ENCODE measurements at regions of chr1 and their contacts with region 1.

Region 1: GRCh38 chr1:24111996-24112779 is at the start of gene MYOM3:
- DNase-seq: peak; percentile 89
- total RNA-seq, gene MYOM3: 249 TPM

Region 2: DNA sequence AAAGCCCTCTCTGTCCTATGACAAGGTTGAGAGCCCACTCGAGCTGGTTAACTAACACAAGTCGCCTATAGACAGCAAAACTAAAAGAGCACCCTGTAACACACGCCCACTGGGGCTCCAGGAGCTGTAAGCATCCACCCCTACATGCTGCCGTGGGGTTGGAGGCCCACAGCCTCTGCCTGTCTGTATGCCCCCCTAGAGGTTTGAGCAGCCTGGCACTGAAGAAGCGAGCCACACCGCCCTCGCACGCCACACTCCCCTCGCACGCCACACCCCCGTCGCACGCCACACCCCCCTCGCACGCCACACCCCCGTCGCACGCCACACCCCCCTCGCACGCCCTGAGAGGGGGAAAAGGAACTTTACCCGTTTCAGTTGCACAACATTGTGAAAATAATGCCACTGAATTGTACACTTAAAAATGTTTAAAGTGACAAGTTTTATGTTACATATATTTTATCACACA is 273.8 kb before region 1 on chr1:
- intact Hi-C with region 1: no loop called
- DNase-seq: peak; percentile 87

Region 3: GRCh38 chr1:23923592-23924499 is 188.3 kb before region 1 on chr1:
- intact Hi-C with region 1: loop called (anchors 10 kb)
- DNase-seq: no peak

Region 4: DNA sequence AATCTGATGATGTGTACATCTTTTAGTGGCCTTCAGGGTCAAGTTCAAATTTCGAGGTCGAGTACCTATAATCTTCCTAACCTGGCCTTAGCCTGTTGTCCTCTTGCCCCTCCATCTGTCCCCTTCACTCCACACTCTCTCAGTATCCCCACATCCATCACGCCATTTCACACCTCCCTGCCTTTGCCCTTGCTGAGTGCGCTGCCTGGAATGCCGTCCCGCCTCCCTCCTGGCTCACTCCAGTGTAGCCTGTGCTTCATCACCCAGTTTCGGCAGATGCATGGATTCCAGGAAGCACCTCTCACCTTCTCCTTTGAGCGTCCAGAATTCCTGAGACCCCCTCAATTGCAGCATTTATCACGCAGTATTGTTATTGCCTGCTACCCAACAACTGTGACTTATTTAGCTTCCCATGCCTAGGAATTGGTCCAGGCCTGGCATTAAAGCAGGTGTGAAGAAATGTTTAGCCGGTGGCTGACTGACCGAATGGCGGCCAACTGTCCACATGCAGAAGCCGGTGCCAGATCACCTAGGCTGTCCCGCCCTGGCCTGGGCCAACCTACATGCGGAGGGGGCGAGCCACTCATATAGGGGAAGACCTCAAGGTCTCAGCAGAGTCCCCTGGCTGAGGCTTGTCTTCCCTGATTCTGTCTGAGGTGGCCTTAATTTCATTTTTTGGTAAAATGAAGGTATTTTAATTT is 34.8 kb before region 1 on chr1:
- intact Hi-C with region 1: loop called (anchors 2 kb)
- DNase-seq: no peak

Region 5: DNA sequence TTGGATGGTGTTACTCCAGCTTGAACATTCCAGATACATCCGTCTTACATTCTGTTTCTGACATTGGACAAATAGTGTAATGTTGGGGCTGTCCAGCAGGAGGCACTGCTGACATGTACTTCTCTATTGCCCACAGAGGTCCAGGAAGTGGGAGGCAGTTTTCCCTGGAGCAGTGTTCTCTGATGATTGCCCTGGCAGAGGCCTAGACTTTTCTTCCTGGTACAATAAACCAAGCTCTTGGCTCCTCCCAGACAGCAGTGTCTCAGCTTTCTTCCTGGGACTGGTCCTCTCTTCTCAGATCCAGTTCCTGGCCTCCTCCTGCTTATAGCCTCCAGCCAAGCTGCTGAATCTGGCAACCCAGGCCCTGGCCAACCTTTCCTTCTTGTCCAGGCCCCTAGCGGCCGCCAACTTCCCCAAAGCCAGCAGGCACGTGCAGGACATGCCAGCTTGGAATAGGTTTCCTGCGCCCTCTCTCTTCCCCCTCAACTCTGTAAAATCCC is 89.8 kb after region 1 on chr1:
- intact Hi-C with region 1: no loop called
- DNase-seq: peak; percentile 83

Measured in cardiac septum (tissue), 1 donor.